ENCODE measurements at regions of chr14 and their contacts with region 1.

Region 1: GRCh38 chr14:99320105-99320572 is 48.1 kb upstream of the BCL11B start:
- DNase-seq: peak; percentile 78
- CTCF ChIP-seq: peak; percentile 74

Region 2: GRCh38 chr14:99047441-99048031 is 272.6 kb before region 1 on chr14:
- CTCF ChIA-PET with region 1: no interaction called
- POLR2A ChIA-PET with region 1: no interaction called
- DNase-seq: no peak
- CTCF ChIP-seq: no peak

Region 3: GRCh38 chr14:99304209-99304608 is 15.9 kb before region 1 on chr14:
- CTCF ChIA-PET with region 1: interaction called, 10 read pairs
- POLR2A ChIA-PET with region 1: no interaction called
- DNase-seq: no peak
- CTCF ChIP-seq: no peak